ENCODE measurements at regions of chr6 and their contacts with region 1.

Region 1: DNA sequence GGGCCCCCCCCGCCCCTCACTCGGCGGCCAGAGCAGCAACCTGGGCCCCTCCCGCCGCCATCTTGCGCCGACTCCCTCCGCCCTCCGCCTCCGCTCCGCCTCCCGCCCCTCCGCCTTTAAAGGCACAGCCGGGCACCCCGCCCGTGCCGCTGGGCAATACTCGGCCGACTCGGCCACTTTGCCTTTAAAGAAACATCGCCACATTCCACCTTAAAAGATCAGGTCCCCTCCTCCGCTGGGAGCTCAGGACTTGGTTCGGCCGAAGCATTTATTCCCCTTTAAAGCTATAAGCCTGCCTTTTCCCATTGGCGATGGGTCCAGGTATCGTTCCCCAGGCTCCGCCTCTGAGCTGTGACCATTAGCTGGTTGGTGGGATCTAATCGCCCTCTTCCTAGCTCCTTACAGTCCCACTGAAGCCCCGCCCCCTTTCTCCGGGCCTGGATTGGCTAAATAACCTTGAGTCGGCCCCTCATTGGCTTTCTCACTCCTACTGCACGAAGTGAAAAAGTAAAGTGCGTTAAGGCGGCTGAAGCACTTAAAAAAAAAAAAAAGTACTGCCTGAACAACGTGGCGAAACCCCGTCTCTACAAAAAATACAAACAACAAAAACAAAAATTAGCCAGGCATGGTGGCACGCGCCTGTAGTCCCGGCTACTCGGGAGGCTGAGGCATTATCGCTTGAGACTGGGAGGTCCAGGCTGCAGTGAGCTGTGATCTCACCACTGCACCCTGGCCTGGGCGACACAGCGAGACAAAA is at the start of gene ZBTB22:
- DNase-seq: peak; percentile 98 to 99
- H3K4me3 ChIP-seq: peak within 1 kb of the TSS; percentile 73
- H3K4me3 Mint-ChIP-seq: peak within 1 kb of the TSS; percentile 89
- H3K27ac Mint-ChIP-seq: peak within 1 kb of the TSS; percentile 90
- H3K4me1 ChIP-seq: peaks cover 22% of the 10 kb centered on the region
- H3K4me1 Mint-ChIP-seq: peaks cover 45% of the 10 kb centered on the region
- H3K27me3 ChIP-seq: no peaks in the 10 kb centered on the region
- H3K27me3 Mint-ChIP-seq: no peaks in the 10 kb centered on the region
- CTCF ChIP-seq: no peak
- total RNA-seq, gene ZBTB22: 11.5 and 12.6 TPM in 2 replicates

Region 2: DNA sequence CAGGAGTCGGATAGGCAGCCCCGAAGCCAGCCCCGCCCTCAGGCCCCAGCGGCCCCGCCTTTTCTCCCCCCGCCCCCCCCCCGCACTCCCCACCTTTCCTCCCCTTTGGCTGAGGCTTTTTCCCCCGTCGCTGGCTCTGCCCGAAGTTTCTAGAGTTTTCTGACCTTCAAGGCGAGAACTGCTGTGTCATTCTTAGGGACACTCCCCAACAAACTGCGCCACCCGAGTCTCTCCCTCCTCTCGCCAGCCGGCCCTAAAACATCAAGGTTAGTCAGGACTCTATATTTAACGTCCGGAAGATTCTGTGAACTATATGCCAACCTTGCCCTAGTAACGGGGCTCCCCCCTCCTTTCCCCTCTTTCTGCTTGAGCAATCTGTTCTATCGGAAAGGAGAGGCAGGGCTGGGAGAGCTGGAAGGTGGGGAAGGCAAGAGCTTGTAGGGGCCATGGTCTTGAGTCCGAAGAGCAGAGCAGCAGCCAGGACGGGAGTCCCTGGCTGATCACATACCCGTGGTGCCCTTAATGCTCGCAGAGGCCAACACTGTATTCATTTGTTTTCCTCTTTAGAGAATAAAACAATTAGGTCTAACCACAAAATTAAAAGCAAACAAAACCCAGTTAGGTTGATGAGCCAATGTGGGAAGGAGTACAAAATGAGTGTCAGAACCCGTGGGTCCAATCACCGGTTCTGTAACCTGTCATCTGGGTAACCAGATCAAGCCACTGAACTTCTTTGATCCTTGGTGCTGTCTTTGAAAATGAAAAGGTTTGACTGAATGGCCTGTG is 1495.6 kb before region 1 on chr6:
- CTCF ChIA-PET with region 1: no interaction called
- POLR2A ChIA-PET with region 1: interaction called, 10 read pairs
- intact Hi-C with region 1: no loop called
- DNase-seq: peak; percentile 79 to 89
- H3K4me3 ChIP-seq: peak overlapping the region; percentile 45
- H3K4me3 Mint-ChIP-seq: peak overlapping the region; percentile 96
- H3K27ac Mint-ChIP-seq: peak overlapping the region; percentile 98
- H3K4me1 ChIP-seq: peaks cover 63% of the 10 kb centered on the region
- H3K4me1 Mint-ChIP-seq: peaks cover 17% of the 10 kb centered on the region
- H3K27me3 ChIP-seq: no peaks in the 10 kb centered on the region
- H3K27me3 Mint-ChIP-seq: no peaks in the 10 kb centered on the region
- CTCF ChIP-seq: no peak

Region 3: GRCh38 chr6:33204378-33205190 is 113.3 kb before region 1 on chr6 and contains the start of gene HSD17B8:
- CTCF ChIA-PET with region 1: no interaction called
- POLR2A ChIA-PET with region 1: no interaction called
- intact Hi-C with region 1: no loop called
- DNase-seq: peak; percentile 93
- H3K4me3 ChIP-seq: peak within 1 kb of the TSS; percentile 69
- H3K4me3 Mint-ChIP-seq: peak within 1 kb of the TSS; percentile 90
- H3K27ac Mint-ChIP-seq: peak within 1 kb of the TSS; percentile 90
- H3K4me1 ChIP-seq: peaks cover 22% of the 10 kb centered on the region
- H3K4me1 Mint-ChIP-seq: peaks cover 31% of the 10 kb centered on the region
- H3K27me3 ChIP-seq: no peaks in the 10 kb centered on the region
- H3K27me3 Mint-ChIP-seq: no peaks in the 10 kb centered on the region
- CTCF ChIP-seq: no peak
- total RNA-seq, gene HSD17B8: 10.0 and 12.5 TPM in 2 replicates

Region 4: DNA sequence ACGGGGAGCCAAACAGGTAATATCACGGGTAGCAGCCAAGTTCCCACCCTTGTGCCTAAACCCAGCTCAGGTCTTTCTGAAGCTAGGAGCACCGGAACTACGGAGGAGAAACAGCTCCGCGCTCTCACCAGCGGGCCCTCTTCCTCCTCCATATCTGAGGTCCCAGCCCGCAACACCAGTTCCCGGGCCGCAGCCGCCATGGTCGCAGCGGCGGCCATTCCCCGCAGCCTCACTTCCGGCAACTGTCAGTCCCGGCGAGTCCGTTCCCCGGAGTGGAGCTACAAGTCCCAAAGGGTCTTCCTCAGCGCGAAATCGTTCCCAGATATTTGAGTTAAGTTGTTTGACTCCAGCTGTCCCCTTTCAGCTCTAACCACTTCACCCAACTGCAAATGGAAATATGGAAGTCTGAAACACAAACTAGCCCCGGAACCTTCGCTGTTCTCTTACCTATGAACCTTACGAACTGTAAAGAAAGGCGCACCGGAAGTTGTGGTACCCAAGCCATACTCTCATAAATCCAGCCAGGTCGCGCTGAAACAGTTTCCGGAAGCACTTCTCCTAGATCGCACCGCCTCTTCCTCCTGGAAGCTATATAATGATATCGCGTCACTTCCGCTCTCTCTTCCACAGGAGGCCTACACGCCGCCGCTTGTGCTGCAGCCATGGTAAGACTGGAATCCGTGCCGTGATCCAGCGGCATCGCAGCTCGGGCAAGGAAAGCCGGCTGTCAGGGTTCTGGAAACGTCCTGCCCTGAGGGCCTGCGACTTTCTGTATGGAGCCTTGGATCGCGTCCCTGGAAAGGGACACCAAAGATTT is 46.2 kb before region 1 on chr6 and contains the starts of genes RPS18 and VPS52:
- CTCF ChIA-PET with region 1: interaction called, 21 read pairs
- POLR2A ChIA-PET with region 1: interaction called, 7 read pairs
- intact Hi-C with region 1: no loop called
- DNase-seq: peak; percentile 93 to 97
- H3K4me3 ChIP-seq: peak within 1 kb of the TSS; percentile 56
- H3K4me3 Mint-ChIP-seq: peak within 1 kb of the TSS; percentile 95
- H3K27ac Mint-ChIP-seq: peak within 1 kb of the TSS; percentile 100
- H3K4me1 ChIP-seq: peaks cover 18% of the 10 kb centered on the region
- H3K4me1 Mint-ChIP-seq: peaks cover 24% of the 10 kb centered on the region
- H3K27me3 ChIP-seq: no peaks in the 10 kb centered on the region
- H3K27me3 Mint-ChIP-seq: no peaks in the 10 kb centered on the region
- CTCF ChIP-seq: no peak
- total RNA-seq, gene RPS18: 2,340 and 2,366 TPM in 2 replicates
- total RNA-seq, gene VPS52: 55.1 and 55.6 TPM in 2 replicates

Region 5: GRCh38 chr6:33288921-33289748 is 28.7 kb before region 1 on chr6 and contains the starts of genes PFDN6 and WDR46:
- CTCF ChIA-PET with region 1: no interaction called
- POLR2A ChIA-PET with region 1: interaction called, 22 read pairs
- intact Hi-C with region 1: no loop called
- DNase-seq: peak; percentile 79 to 83
- H3K4me3 ChIP-seq: peak within 1 kb of the TSS; percentile 65
- H3K4me3 Mint-ChIP-seq: peak within 1 kb of the TSS; percentile 87
- H3K27ac Mint-ChIP-seq: peak within 1 kb of the TSS; percentile 94
- H3K4me1 ChIP-seq: peaks cover 7% of the 10 kb centered on the region; the same call in 1 of the 2 replicates
- H3K4me1 Mint-ChIP-seq: peaks cover 13% of the 10 kb centered on the region
- H3K27me3 ChIP-seq: no peaks in the 10 kb centered on the region
- H3K27me3 Mint-ChIP-seq: no peaks in the 10 kb centered on the region
- CTCF ChIP-seq: no peak
- total RNA-seq, gene PFDN6: 65.9 and 81.8 TPM in 2 replicates
- total RNA-seq, gene WDR46: 58.2 and 62.2 TPM in 2 replicates

Region 6: DNA sequence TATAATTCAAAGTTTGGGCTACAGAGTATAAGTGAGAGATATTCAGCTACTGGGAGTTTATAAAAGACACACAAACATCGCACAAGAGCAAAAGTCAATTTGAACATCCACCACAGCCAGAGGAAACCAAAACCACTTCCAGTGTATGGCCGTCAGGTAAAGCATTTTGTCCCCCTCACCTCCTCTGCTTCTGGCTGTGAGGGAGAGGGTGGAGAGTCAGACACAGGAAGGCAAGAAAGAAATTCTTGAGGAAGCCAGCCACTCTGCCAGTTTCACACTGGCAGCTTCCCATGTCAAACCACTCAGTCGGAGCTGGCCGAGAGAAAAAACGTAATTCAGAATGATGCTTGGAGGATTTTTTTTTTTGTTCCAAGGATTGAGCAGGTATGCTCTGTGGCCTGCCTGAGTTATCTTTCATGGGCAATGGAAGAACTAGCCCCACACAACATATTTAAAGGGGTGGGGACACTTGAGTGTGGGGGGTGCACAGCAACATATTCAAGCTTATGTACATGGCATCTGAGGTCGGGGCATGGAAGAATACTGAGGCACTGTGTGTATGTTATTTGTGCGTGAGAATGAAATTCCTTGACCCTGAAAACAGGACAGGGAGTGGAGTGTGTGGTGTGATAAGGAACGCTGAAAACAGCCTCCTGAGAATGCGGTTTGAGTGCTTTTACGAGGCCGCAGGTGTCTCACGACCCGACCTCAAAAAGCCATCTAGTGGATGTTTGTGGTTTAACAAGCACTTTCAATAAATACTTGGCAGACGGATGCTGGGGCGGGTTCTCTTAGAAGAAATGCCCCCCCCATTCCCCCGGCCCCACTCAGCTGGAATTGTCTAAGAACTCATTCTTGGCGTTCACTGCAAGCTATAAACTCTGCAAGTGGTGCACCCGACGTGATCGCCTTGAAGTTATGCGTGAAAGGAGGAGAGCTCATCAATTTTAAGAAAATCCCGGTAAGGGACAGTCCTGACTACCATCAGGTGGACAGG is 27.2 kb after region 1 on chr6:
- CTCF ChIA-PET with region 1: interaction called, 7 read pairs
- POLR2A ChIA-PET with region 1: no interaction called
- intact Hi-C with region 1: loop called (anchors 1 kb)
- DNase-seq: peak; percentile 78 to 80
- H3K4me3 ChIP-seq: no peak overlapping the region
- H3K4me3 Mint-ChIP-seq: peak overlapping the region; percentile 48
- H3K27ac Mint-ChIP-seq: peak overlapping the region; percentile 73
- H3K4me1 ChIP-seq: peaks cover 13% of the 10 kb centered on the region
- H3K4me1 Mint-ChIP-seq: peaks cover 34% of the 10 kb centered on the region
- H3K27me3 ChIP-seq: no peaks in the 10 kb centered on the region
- H3K27me3 Mint-ChIP-seq: no peaks in the 10 kb centered on the region
- CTCF ChIP-seq: peak; percentile 55 to 59

Region 7: GRCh38 chr6:33356295-33356694 is 38.4 kb after region 1 on chr6:
- CTCF ChIA-PET with region 1: no interaction called
- POLR2A ChIA-PET with region 1: no interaction called
- intact Hi-C with region 1: no loop called
- DNase-seq: no peak
- H3K4me3 ChIP-seq: no peak overlapping the region
- H3K4me3 Mint-ChIP-seq: no peak overlapping the region
- H3K27ac Mint-ChIP-seq: no peak overlapping the region
- H3K4me1 ChIP-seq: peaks cover 22% of the 10 kb centered on the region
- H3K4me1 Mint-ChIP-seq: peaks cover 23% of the 10 kb centered on the region
- H3K27me3 ChIP-seq: no peaks in the 10 kb centered on the region
- H3K27me3 Mint-ChIP-seq: no peaks in the 10 kb centered on the region
- CTCF ChIP-seq: no peak

Region 8: DNA sequence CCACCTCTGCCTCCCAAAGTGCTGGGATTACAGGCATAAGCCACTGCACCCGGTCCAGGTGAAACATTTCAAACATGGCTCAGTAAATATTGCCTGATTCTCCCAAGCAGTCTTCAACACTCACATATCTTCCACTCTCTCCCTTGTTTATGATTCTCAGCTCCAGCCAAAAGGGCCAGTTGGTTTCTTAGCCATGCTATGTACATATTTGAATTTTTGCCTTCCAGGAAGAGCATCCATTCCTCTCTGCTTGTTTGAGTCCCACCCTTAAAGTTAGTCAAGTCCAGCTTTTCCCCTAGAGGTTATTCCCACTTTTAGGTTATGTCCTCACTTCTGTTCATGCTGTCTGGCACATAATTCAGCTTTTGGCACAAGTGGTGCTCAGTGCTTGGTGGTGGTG is 79.7 kb after region 1 on chr6:
- CTCF ChIA-PET with region 1: interaction called, 3 read pairs
- POLR2A ChIA-PET with region 1: interaction called, 11 read pairs
- intact Hi-C with region 1: no loop called
- DNase-seq: no peak
- H3K4me3 ChIP-seq: no peak overlapping the region
- H3K4me3 Mint-ChIP-seq: no peak overlapping the region
- H3K27ac Mint-ChIP-seq: no peak overlapping the region
- H3K4me1 ChIP-seq: 0 out of 2 replicates have a peak, but pooled peaks cover 5% of the 10 kb centered on the region
- H3K4me1 Mint-ChIP-seq: peaks cover 27% of the 10 kb centered on the region
- H3K27me3 ChIP-seq: no peaks in the 10 kb centered on the region
- H3K27me3 Mint-ChIP-seq: no peaks in the 10 kb centered on the region
- CTCF ChIP-seq: no peak

Region 9: DNA sequence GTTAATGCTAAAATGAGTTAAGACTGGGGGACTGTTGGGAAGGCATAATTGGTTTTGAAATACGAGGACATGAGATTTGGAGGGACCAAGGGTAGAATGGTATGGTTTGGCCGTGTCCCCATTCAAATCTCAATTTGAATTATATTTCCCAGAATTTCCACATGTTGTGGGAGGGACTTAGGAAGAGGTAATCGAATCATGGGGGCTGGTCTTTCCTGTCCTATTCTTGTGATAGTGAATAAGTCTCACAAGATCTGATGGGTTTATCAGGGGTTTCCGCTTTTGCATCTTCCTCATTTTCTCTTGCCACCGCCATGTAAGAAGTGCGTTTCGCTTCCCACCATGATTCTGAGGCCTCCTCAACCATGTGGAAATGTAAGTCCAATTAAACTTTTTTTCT is 149.2 kb after region 1 on chr6:
- CTCF ChIA-PET with region 1: no interaction called
- POLR2A ChIA-PET with region 1: no interaction called
- intact Hi-C with region 1: no loop called
- DNase-seq: no peak
- H3K4me3 ChIP-seq: no peak overlapping the region
- H3K4me3 Mint-ChIP-seq: no peak overlapping the region
- H3K27ac Mint-ChIP-seq: no peak overlapping the region
- H3K4me1 ChIP-seq: no peaks in the 10 kb centered on the region
- H3K4me1 Mint-ChIP-seq: no peaks in the 10 kb centered on the region
- H3K27me3 ChIP-seq: no peaks in the 10 kb centered on the region
- H3K27me3 Mint-ChIP-seq: peaks cover 5% of the 10 kb centered on the region
- CTCF ChIP-seq: no peak

Region 10: DNA sequence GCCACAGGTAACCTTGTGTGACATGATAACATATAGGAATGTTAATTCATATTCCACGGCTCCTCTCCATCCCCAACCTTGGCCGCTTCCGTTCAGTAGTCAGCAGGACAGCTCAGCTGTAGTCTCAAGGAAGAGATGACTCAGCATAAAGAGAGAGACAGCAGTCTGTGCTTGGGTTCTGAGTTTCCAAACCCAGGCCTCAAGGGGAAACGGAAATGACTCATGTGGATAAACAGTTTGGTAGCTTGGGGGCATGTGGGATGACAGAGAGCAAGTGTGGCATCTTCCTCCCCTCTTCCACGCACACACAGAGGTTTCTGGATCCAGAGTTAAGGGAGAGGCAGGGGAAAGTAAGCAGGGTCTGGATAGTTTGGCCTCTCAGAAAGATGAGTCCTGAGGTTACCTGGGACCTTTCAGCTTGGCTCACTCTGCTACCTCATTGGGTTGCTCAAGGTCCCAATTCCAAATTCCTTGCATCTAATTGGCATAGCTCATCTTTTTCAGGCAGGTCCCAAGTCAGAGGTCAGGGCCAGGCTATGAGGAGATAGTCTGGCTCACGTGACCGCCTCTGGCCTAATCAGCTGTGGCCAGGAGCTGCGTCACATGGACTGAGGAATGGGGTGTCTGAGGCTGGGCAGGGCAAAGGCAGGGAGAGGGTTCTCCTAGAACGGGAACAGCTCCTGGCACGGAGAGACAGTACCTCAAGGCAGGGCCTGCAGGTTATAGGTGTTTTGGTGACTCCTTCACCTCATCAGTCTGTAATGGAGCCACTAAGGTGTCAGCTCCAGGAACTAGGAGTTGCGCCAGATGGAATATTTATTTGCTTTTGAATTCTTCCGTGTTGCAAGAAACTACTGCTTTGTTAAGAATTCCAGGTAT is 522.4 kb after region 1 on chr6:
- CTCF ChIA-PET with region 1: no interaction called
- POLR2A ChIA-PET with region 1: no interaction called
- intact Hi-C with region 1: no loop called
- DNase-seq: peak; percentile 76 to 88
- H3K4me3 ChIP-seq: no peak overlapping the region
- H3K4me3 Mint-ChIP-seq: peak overlapping the region; percentile 1
- H3K27ac Mint-ChIP-seq: peak overlapping the region; percentile 62
- H3K4me1 ChIP-seq: peaks cover 37% of the 10 kb centered on the region
- H3K4me1 Mint-ChIP-seq: peaks cover 23% of the 10 kb centered on the region
- H3K27me3 ChIP-seq: no peaks in the 10 kb centered on the region
- H3K27me3 Mint-ChIP-seq: no peaks in the 10 kb centered on the region
- CTCF ChIP-seq: no peak

Measured in Caco-2 (cell line).